ENCODE measurements at regions of chr5 and their contacts with region 1.

Region 1: GRCh38 chr5:134527146-134527960 is 1.9 kb downstream of the JADE2 start:
- DNase-seq: peak; percentile 92
- H3K4me3 ChIP-seq: peak overlapping the region; percentile 84
- H3K27ac ChIP-seq: peak overlapping the region; percentile 68
- H3K4me1 ChIP-seq: peaks cover 13% of the 10 kb centered on the region
- H3K27me3 ChIP-seq: no peaks in the 10 kb centered on the region
- CTCF ChIP-seq: peak; percentile 78

Region 2: DNA sequence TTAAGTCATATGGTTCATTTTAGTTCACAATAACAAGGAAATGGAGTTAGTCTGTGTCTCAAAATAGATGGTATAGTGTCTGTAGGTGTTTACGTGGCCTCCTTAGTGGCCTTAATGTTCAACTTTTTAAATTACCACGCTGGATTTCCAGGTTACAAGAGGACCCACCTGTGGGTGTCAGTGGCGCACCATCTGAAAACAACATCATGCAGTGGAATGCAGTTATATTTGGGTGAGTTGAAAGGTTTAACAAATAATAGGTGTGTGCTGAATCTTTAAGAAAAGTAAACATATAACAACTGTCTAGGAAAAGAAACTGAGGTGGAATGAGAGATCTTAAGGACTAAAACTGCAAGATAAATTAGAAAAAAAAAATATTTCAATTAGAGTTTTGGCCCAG is 153.1 kb before region 1 on chr5:
- CTCF ChIA-PET with region 1: interaction called, 10 read pairs
- POLR2A ChIA-PET with region 1: no interaction called
- intact Hi-C with region 1: no loop called
- DNase-seq: no peak
- H3K4me3 ChIP-seq: no peak overlapping the region
- H3K27ac ChIP-seq: no peak overlapping the region
- H3K4me1 ChIP-seq: no peaks in the 10 kb centered on the region
- H3K27me3 ChIP-seq: no peaks in the 10 kb centered on the region
- CTCF ChIP-seq: no peak

Region 3: GRCh38 chr5:134465816-134466240 is 61.5 kb before region 1 on chr5:
- CTCF ChIA-PET with region 1: no interaction called
- POLR2A ChIA-PET with region 1: interaction called, 8 read pairs
- intact Hi-C with region 1: loop called (anchors 5 kb)
- DNase-seq: peak; percentile 87
- H3K4me3 ChIP-seq: peak overlapping the region; percentile 54
- H3K27ac ChIP-seq: peak overlapping the region; percentile 91
- H3K4me1 ChIP-seq: peaks cover 16% of the 10 kb centered on the region
- H3K27me3 ChIP-seq: no peaks in the 10 kb centered on the region
- CTCF ChIP-seq: no peak

Region 4: GRCh38 chr5:134510970-134511787 is 16.2 kb before region 1 on chr5:
- CTCF ChIA-PET with region 1: interaction called, 10 read pairs
- POLR2A ChIA-PET with region 1: no interaction called
- intact Hi-C with region 1: no loop called
- DNase-seq: no peak
- H3K4me3 ChIP-seq: no peak overlapping the region
- H3K27ac ChIP-seq: no peak overlapping the region
- H3K4me1 ChIP-seq: no peaks in the 10 kb centered on the region
- H3K27me3 ChIP-seq: no peaks in the 10 kb centered on the region
- CTCF ChIP-seq: no peak